ENCODE measurements at regions of chr7 and their contacts with region 1.

Region 1: GRCh38 chr7:100563809-100564400 is 9.8 kb downstream of the SAP25 start:
- DNase-seq: peak; percentile 91
- ATAC-seq: peak; percentile 69
- H3K4me3 Mint-ChIP-seq: no peak overlapping the region
- H3K27ac Mint-ChIP-seq: no peak overlapping the region
- H3K4me1 Mint-ChIP-seq: peaks cover 24% of the 10 kb centered on the region
- H3K27me3 Mint-ChIP-seq: no peaks in the 10 kb centered on the region

Region 2: DNA sequence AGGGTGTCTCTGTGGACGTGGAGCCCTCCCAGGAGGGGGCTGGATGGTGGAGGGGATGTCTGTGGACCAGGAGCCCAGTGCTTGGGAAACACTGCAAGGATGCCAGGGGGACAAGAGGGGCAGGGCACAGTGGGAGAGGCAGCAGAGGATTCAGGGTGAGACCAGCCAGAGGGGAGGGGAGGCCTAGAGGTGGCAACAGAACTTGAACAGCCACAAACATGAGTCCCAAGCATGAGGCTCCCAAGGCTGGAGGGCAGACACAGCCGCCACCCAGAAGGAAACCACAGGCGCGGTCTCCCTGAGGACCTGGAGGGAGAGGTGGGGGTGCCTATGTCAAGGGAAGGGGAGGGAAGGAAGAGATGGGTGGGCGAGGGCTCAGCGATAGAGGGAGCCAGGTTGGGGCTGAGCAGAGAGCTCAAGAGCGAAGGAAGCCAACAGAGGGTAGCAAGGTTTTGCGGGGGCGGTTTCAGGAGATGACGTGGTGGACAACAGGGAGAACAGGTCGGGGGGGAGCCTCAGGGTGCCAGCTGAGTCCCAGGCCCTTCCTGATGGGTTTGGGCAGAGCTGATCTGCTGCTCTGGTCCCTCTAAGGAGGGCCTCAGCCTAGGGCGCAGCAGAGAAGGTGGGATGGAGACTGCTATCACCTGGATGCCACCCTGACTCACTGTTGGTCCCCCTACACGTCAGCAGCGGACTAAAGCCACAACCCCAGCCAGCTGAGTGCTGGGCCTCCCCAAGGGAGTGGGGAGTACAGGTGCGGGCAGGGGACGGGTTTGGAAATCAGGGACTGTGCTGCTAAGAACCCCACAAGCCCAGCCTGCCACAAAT is 197.3 kb before region 1 on chr7:
- CTCF ChIA-PET with region 1: no interaction called
- POLR2A ChIA-PET with region 1: no interaction called
- intact Hi-C with region 1: no loop called
- DNase-seq: peak; percentile 61
- ATAC-seq: peak; percentile 11
- H3K4me3 Mint-ChIP-seq: no peak overlapping the region
- H3K27ac Mint-ChIP-seq: peak overlapping the region; percentile 67
- H3K4me1 Mint-ChIP-seq: peaks cover 31% of the 10 kb centered on the region
- H3K27me3 Mint-ChIP-seq: no peaks in the 10 kb centered on the region

Region 3: DNA sequence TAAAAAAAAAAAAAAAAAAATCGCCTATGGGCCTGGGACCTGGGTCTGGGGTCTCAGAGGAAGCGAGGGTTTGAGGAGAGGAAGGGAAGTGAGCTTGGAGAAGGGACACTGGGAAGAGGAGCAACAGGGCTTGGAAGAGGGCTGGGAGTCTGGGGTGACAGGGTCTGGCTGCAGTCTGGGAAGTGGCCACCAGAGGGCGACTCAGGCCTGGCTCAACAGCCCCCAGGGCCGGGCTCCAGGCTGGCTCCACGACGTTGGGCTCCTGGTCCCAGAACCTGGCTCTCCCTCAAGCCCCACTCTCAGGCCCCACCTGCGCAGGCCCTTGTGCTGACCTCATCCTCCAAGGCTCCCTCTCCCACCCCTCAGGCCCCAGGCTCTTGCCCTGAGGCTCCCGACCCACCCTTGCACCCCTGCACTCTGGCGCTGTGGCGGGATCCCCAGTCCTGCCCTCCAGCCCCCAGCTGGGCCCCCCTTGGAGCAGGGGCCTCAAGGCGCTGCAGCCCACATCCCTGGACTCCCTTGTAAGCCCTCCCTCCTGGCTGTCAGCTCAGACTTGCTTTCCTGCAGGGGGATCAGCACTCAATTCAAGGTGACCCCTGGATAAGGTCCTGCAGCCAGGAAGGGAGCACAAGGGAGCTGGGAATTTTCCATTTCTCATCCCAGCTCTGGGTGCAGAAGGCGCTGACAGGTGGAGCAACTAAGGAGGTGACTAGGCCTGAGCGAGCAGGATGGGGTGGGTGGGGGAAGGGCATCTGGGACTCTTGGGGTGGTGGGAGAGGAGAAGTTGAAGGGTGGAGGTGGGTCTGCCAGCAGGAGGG is 94.5 kb before region 1 on chr7:
- CTCF ChIA-PET with region 1: interaction called, 45 read pairs
- POLR2A ChIA-PET with region 1: no interaction called
- intact Hi-C with region 1: loop called (anchors 1 kb)
- DNase-seq: peak; percentile 91
- ATAC-seq: peak; percentile 92
- H3K4me3 Mint-ChIP-seq: no peak overlapping the region
- H3K27ac Mint-ChIP-seq: no peak overlapping the region
- H3K4me1 Mint-ChIP-seq: peaks cover 31% of the 10 kb centered on the region
- H3K27me3 Mint-ChIP-seq: no peaks in the 10 kb centered on the region

Region 4: GRCh38 chr7:100538654-100539435 is 25.1 kb before region 1 on chr7 and contains the start of gene AGFG2:
- CTCF ChIA-PET with region 1: interaction called, 21 read pairs
- POLR2A ChIA-PET with region 1: interaction called, 4 read pairs
- intact Hi-C with region 1: loop called in 1 of 2 experiments (anchors 1 kb)
- DNase-seq: peak; percentile 100
- ATAC-seq: peak; percentile 92
- H3K4me3 Mint-ChIP-seq: peak within 1 kb of the TSS; percentile 98
- H3K27ac Mint-ChIP-seq: peak within 1 kb of the TSS; percentile 95
- H3K4me1 Mint-ChIP-seq: peaks cover 42% of the 10 kb centered on the region
- H3K27me3 Mint-ChIP-seq: no peaks in the 10 kb centered on the region
- total RNA-seq, gene AGFG2: 49.3 to 49.4 TPM

Region 5: GRCh38 chr7:100545360-100546128 is 18.4 kb before region 1 on chr7:
- CTCF ChIA-PET with region 1: interaction called, 41 read pairs
- POLR2A ChIA-PET with region 1: interaction called, 3 read pairs
- intact Hi-C with region 1: loop called in 1 of 2 experiments (anchors 1 kb)
- DNase-seq: peak; percentile 82
- ATAC-seq: peak; percentile 78
- H3K4me3 Mint-ChIP-seq: peak overlapping the region; percentile 98
- H3K27ac Mint-ChIP-seq: peak overlapping the region; percentile 99
- H3K4me1 Mint-ChIP-seq: peaks cover 96% of the 10 kb centered on the region
- H3K27me3 Mint-ChIP-seq: no peaks in the 10 kb centered on the region

Region 6: GRCh38 chr7:100726996-100727761 is 163.3 kb after region 1 on chr7:
- CTCF ChIA-PET with region 1: interaction called, 7 read pairs
- POLR2A ChIA-PET with region 1: no interaction called
- intact Hi-C with region 1: loop called (anchors 1 to 5 kb)
- DNase-seq: no peak
- ATAC-seq: no peak
- H3K4me3 Mint-ChIP-seq: no peak overlapping the region
- H3K27ac Mint-ChIP-seq: no peak overlapping the region
- H3K4me1 Mint-ChIP-seq: peaks cover 3% of the 10 kb centered on the region
- H3K27me3 Mint-ChIP-seq: peaks cover 13% of the 10 kb centered on the region